CD4-positive, alpha-beta T cell (primary cell): ENCODE measurements at regions of chr13 and their contacts with region 1.

Region 1: GRCh38 chr13:45047394-45048310 is 58.3 kb downstream of the GPALPP1 start:
- DNase-seq: peak; percentile 64 to 88 (median 72)
- ATAC-seq: peak; percentile 95
- H3K4me3 ChIP-seq: peak overlapping the region; percentile 40
- H3K4me3 Mint-ChIP-seq: peak overlapping the region; percentile 78
- H3K27ac ChIP-seq: no peak overlapping the region
- H3K27ac Mint-ChIP-seq: no peak overlapping the region
- H3K4me1 ChIP-seq: peaks cover 10% of the 10 kb centered on the region
- H3K4me1 Mint-ChIP-seq: peaks cover 6% of the 10 kb centered on the region
- H3K27me3 ChIP-seq: peaks cover 0 to 9% of the 10 kb centered on the region in 2 experiments
- H3K27me3 Mint-ChIP-seq: peaks cover 6% of the 10 kb centered on the region
- CTCF ChIP-seq: peak; percentile 88

Region 2: GRCh38 chr13:44680746-44681355 is 366.8 kb before region 1 on chr13:
- CTCF ChIA-PET with region 1: no interaction called
- POLR2A ChIA-PET with region 1: no interaction called
- intact Hi-C with region 1: no loop called
- DNase-seq: no peak
- ATAC-seq: no peak
- H3K4me3 ChIP-seq: no peak overlapping the region
- H3K4me3 Mint-ChIP-seq: no peak overlapping the region
- H3K27ac ChIP-seq: no peak overlapping the region
- H3K27ac Mint-ChIP-seq: no peak overlapping the region
- H3K4me1 ChIP-seq: no peaks in the 10 kb centered on the region
- H3K4me1 Mint-ChIP-seq: no peaks in the 10 kb centered on the region
- H3K27me3 ChIP-seq: no peaks in the 10 kb centered on the region
- H3K27me3 Mint-ChIP-seq: no peaks in the 10 kb centered on the region
- CTCF ChIP-seq: no peak

Region 3: GRCh38 chr13:44854313-44855060 is 193.2 kb before region 1 on chr13:
- CTCF ChIA-PET with region 1: no interaction called
- POLR2A ChIA-PET with region 1: no interaction called
- intact Hi-C with region 1: no loop called
- DNase-seq: no peak
- ATAC-seq: no peak
- H3K4me3 ChIP-seq: no peak overlapping the region
- H3K4me3 Mint-ChIP-seq: no peak overlapping the region
- H3K27ac ChIP-seq: no peak overlapping the region
- H3K27ac Mint-ChIP-seq: no peak overlapping the region
- H3K4me1 ChIP-seq: no peaks in the 10 kb centered on the region
- H3K4me1 Mint-ChIP-seq: no peaks in the 10 kb centered on the region
- H3K27me3 ChIP-seq: peaks cover 2 to 5% of the 10 kb centered on the region in 2 experiments
- H3K27me3 Mint-ChIP-seq: peaks cover 27% of the 10 kb centered on the region
- CTCF ChIP-seq: no peak

Region 4: GRCh38 chr13:45082964-45083363 is 35.3 kb after region 1 on chr13:
- CTCF ChIA-PET with region 1: no interaction called
- POLR2A ChIA-PET with region 1: no interaction called
- intact Hi-C with region 1: no loop called
- DNase-seq: no peak
- ATAC-seq: no peak
- H3K4me3 ChIP-seq: no peak overlapping the region
- H3K4me3 Mint-ChIP-seq: no peak overlapping the region
- H3K27ac ChIP-seq: no peak overlapping the region
- H3K27ac Mint-ChIP-seq: no peak overlapping the region
- H3K4me1 ChIP-seq: no peaks in the 10 kb centered on the region
- H3K4me1 Mint-ChIP-seq: no peaks in the 10 kb centered on the region
- H3K27me3 ChIP-seq: no peaks in the 10 kb centered on the region
- H3K27me3 Mint-ChIP-seq: no peaks in the 10 kb centered on the region
- CTCF ChIP-seq: no peak

Region 5: DNA sequence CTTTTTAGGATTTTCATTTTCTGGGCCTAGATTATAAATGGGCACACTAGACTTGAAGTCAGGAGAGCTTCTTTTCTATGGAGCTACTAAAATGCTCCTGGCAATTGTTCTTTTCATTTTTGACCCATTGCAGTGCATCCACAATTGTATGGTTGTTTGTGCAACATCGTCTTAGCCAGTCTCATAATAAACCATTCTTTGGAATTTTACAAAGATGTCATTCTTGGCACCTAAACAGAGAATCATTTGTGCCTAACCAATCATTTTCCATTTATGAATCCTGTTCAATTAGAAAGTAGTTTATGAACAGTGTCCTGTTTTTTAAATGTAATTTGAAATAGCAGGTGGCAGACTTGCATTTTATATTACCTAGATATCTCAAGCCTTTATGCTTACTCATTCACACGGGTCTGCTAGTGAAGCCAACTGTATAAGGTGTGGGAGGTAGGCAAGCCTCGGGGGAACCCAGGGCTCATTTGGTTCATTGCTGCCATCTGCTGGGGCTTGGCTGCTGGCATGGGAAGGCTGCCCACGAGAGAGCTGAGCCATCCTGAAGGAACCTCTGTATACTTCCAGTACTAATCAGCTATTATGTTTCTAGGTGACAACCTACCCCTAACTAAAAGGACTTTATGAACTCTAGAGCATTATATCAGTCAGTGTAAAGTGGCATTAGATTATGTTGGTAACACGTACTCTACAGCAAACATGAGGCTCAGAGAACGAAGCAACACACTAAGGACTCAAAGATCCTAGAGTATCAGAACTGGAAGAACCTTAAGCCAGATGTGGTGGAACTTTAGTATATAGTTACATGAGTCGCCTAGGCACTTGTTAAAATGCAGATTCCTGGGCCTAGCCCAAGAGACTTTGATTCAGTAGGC is 233.3 kb after region 1 on chr13:
- CTCF ChIA-PET with region 1: interaction called, 4 read pairs
- POLR2A ChIA-PET with region 1: no interaction called
- intact Hi-C with region 1: loop called (anchors 1 kb)
- DNase-seq: peak; percentile 9 to 56 (median 26)
- ATAC-seq: no peak
- H3K4me3 ChIP-seq: no peak overlapping the region
- H3K4me3 Mint-ChIP-seq: no peak overlapping the region
- H3K27ac ChIP-seq: no peak overlapping the region
- H3K27ac Mint-ChIP-seq: no peak overlapping the region
- H3K4me1 ChIP-seq: no peaks in the 10 kb centered on the region
- H3K4me1 Mint-ChIP-seq: peaks cover 6% of the 10 kb centered on the region
- H3K27me3 ChIP-seq: no peaks in the 10 kb centered on the region
- H3K27me3 Mint-ChIP-seq: no peaks in the 10 kb centered on the region
- CTCF ChIP-seq: peak; percentile 33

Region 6: DNA sequence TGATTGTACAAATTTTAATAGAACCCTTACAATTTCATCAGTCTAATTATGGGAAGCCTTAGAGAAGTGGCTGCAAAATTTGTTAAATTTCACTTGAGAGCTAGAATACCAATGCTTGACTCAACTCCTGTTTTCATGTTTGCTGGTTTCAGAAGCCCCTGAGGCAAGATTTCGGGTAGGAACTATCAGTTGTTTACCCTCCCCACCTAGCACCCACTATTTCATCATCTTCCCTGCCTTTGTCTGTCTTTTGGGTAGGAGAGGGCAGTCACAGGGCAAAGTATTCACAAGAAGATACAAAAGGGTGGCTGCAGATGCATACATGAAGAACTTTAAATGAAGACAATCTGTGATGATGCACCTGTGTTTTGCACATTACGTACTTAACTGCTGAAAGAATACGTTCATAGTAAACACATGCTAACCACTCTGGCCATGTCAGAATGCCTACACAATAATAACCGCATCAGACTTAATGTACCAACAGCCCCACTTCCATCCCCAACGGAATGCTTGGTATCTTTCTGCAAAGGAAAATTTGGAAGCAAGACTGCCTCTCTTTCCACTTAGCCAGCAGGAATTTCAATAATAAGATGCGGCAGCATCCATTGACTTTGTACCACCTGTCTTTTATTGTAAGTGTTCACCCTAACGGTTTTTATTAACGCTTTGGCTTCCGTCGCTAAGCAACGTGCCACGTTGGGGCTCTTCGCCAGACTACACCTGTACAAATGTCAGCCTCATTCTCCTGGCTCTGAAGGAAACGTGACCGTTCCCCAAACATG is 262.9 kb after region 1 on chr13:
- CTCF ChIA-PET with region 1: interaction called, 13 read pairs
- POLR2A ChIA-PET with region 1: interaction called, 6 read pairs
- intact Hi-C with region 1: loop called (anchors 1 kb)
- DNase-seq: no peak
- ATAC-seq: no peak
- H3K4me3 ChIP-seq: peak overlapping the region; percentile 63
- H3K4me3 Mint-ChIP-seq: peak overlapping the region; percentile 85
- H3K27ac ChIP-seq: no peak overlapping the region
- H3K27ac Mint-ChIP-seq: no peak overlapping the region
- H3K4me1 ChIP-seq: peaks cover 24% of the 10 kb centered on the region
- H3K4me1 Mint-ChIP-seq: peaks cover 20% of the 10 kb centered on the region
- H3K27me3 ChIP-seq: no peaks in the 10 kb centered on the region
- H3K27me3 Mint-ChIP-seq: peaks cover 8% of the 10 kb centered on the region
- CTCF ChIP-seq: no peak

Region 7: DNA sequence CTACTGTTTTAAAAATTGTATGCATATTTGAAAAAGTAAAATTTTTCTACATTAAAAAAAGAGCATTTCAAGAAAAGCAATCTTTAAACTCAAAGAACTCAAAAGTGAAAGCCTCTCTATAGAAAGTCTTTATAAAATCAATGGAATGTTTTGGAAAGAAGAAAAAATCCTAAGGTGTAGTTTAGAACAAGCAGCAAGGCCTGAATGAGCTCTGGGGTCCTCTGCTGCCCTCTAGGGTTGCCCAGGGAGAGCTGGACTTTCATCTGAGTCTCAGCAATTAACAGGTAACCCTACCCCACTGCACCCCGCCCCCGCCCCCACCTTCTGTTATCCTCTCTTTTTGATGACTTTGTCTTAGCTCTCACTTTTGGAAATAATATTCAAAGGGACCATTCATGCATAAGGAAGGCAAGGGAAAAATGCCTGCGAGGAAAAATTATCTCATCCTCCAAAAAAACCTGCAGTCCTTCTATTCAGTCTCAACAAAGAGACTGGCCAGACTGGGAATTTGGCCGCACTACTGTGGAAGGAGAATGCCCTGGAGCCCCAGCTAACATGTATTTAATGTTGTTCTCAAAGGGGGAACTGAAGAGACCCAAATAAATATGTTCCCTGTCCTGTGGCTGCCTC is 346.4 kb after region 1 on chr13:
- CTCF ChIA-PET with region 1: interaction called, 8 read pairs
- POLR2A ChIA-PET with region 1: no interaction called
- intact Hi-C with region 1: loop called in 1 of 2 experiments (anchors 5 kb)
- DNase-seq: peak in 8 of 14 experiments; percentile 13 to 71 (median 43)
- ATAC-seq: no peak
- H3K4me3 ChIP-seq: no peak overlapping the region
- H3K4me3 Mint-ChIP-seq: no peak overlapping the region
- H3K27ac ChIP-seq: no peak overlapping the region
- H3K27ac Mint-ChIP-seq: peak overlapping the region; percentile 86
- H3K4me1 ChIP-seq: peaks cover 32% of the 10 kb centered on the region
- H3K4me1 Mint-ChIP-seq: peaks cover 48% of the 10 kb centered on the region
- H3K27me3 ChIP-seq: no peaks in the 10 kb centered on the region
- H3K27me3 Mint-ChIP-seq: no peaks in the 10 kb centered on the region
- CTCF ChIP-seq: peak; percentile 70

Region 8: GRCh38 chr13:45490068-45490467 is 442.4 kb after region 1 on chr13:
- CTCF ChIA-PET with region 1: interaction called, 11 read pairs
- POLR2A ChIA-PET with region 1: no interaction called
- intact Hi-C with region 1: loop called (anchors 2 to 5 kb)
- DNase-seq: peak in 6 of 14 experiments; percentile 2 to 58 (median 39)
- ATAC-seq: peak; percentile 89
- H3K4me3 ChIP-seq: no peak overlapping the region
- H3K4me3 Mint-ChIP-seq: no peak overlapping the region
- H3K27ac ChIP-seq: no peak overlapping the region
- H3K27ac Mint-ChIP-seq: no peak overlapping the region
- H3K4me1 ChIP-seq: no peaks in the 10 kb centered on the region
- H3K4me1 Mint-ChIP-seq: no peaks in the 10 kb centered on the region
- H3K27me3 ChIP-seq: no peaks in the 10 kb centered on the region
- H3K27me3 Mint-ChIP-seq: no peaks in the 10 kb centered on the region
- CTCF ChIP-seq: peak; percentile 66

Region 9: DNA sequence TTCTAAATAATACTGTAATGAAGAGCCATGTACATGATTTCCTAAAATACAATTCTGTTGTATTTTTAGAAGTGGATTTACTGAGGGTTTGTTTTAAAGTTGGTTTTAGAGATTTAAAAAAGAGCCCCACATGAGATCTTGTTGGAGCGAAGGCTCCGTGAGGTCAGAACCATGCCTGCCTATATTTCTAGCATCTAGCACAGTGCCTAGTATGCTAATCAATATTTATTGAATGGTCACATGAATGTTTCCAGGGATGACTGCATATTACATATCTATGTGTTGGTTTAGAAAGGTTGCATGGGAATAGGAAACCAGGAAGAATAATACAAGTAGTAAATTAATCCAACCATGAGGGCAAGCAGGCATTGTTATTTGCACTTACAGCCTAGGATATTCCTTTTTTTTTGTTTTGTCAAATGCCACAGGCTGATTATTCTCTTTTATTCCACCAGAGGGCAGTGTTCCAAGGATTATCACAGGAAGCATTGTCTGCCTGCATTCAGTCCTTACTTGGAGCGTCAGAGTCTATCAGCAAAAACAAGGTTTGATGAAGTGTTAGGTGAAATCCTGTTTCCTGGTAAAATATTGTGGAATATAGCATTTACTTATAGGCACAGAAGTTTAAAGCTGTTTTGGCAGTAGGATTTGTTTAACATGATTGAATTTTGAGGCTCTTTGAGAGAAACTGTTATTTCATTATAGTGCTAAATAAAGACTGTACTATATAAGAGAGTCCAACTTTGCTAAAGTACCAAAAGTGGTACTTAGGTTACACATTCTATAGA is 463.9 kb after region 1 on chr13:
- CTCF ChIA-PET with region 1: no interaction called
- POLR2A ChIA-PET with region 1: no interaction called
- intact Hi-C with region 1: loop called in 1 of 2 experiments (anchors 2 kb)
- DNase-seq: peak in 8 of 14 experiments; percentile 2 to 83 (median 31)
- ATAC-seq: peak; percentile 91
- H3K4me3 ChIP-seq: no peak overlapping the region
- H3K4me3 Mint-ChIP-seq: no peak overlapping the region
- H3K27ac ChIP-seq: no peak overlapping the region
- H3K27ac Mint-ChIP-seq: peak overlapping the region; percentile 32
- H3K4me1 ChIP-seq: no peaks in the 10 kb centered on the region
- H3K4me1 Mint-ChIP-seq: peaks cover 16% of the 10 kb centered on the region
- H3K27me3 ChIP-seq: no peaks in the 10 kb centered on the region
- H3K27me3 Mint-ChIP-seq: no peaks in the 10 kb centered on the region
- CTCF ChIP-seq: peak; percentile 92